Activated naive CD4-positive, alpha-beta T cell treated with anti-CD3 and anti-CD28 coated beads for 36 hours (primary cell): ENCODE measurements at regions of chrX and their contacts with region 1.

Region 1: DNA sequence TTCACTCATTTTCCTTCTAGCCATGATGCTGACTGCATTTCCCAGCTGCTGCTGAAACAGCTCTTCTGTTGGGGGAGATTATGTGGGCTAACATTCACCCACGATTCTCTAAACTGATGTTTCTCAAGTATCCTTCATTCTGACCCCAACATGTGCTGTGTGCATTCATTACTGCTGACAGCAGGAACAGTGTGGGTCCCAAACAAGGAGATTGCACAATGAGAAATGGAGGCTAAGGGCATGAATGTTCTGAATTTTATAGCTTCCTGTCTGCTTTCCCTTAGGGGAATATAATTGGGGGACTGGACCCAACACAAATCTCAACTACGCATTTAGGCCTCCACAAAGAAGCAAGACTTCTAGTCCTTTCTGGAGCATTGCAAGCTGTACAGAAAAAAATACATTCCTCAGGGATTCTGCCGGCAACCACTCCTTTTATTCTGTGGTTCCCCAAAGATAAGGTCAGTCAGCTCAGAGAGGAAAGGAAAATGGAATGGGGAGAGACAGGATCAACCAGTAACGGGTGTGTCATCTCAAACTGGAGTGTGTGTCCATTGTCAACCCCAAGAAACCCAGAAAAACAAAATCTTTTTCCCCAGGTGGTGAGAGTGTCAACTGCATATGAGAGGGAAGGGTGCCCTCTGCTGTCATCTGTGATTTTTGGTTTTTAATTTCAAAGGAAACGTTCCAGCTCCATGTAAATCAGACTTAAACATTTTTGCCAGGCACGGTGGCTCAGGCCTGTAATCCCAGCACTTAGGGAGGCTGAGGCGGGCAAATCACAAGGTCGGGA is 81.5 kb upstream of the EGFL6 start:
- DNase-seq: peak; percentile 58
- H3K4me3 Mint-ChIP-seq: no peak overlapping the region
- H3K27ac Mint-ChIP-seq: peak overlapping the region; percentile 68
- H3K4me1 Mint-ChIP-seq: peaks cover 16% of the 10 kb centered on the region
- H3K27me3 Mint-ChIP-seq: no peaks in the 10 kb centered on the region

Region 2: DNA sequence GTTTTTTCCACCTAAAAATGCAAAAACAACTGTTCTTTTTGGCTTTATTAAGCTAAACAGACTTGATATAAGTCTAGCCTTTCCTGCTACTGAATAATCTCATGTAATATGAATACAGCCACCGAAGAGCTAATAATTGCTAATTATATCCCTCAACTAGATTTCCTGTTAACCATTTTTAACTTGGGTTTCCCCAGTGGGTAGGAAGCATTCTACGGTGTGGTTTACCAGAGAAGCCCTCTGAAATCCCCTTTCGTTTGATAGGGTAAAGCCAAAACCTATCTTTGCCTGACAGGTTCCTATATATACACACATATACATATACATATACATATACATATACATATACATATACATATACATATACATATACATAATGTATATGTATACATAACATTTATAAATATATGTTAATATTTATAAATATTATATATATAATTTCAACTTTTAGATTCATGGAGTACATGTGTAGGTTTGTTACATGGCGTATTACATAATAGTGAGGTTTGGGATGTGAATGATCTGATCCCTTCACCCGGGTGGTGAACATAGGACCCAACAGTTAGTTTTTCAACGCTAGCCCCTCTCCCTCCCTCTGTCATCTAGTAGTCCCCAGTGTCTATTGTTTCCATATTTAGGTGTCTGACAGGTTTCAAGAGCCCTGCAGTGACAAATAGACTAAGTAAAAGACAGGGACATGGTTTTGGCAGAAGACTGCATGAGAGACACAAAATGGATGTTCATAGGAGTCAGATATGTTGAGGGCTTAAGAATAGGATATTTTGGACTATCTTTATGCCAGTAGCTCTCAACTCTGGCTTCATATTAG is 230.5 kb before region 1 on chrX:
- CTCF ChIA-PET with region 1: no interaction called
- intact Hi-C with region 1: loop called (anchors 5 kb)
- DNase-seq: peak; percentile 17
- H3K4me3 Mint-ChIP-seq: no peak overlapping the region
- H3K27ac Mint-ChIP-seq: no peak overlapping the region
- H3K4me1 Mint-ChIP-seq: peaks cover 29% of the 10 kb centered on the region
- H3K27me3 Mint-ChIP-seq: no peaks in the 10 kb centered on the region

Region 3: DNA sequence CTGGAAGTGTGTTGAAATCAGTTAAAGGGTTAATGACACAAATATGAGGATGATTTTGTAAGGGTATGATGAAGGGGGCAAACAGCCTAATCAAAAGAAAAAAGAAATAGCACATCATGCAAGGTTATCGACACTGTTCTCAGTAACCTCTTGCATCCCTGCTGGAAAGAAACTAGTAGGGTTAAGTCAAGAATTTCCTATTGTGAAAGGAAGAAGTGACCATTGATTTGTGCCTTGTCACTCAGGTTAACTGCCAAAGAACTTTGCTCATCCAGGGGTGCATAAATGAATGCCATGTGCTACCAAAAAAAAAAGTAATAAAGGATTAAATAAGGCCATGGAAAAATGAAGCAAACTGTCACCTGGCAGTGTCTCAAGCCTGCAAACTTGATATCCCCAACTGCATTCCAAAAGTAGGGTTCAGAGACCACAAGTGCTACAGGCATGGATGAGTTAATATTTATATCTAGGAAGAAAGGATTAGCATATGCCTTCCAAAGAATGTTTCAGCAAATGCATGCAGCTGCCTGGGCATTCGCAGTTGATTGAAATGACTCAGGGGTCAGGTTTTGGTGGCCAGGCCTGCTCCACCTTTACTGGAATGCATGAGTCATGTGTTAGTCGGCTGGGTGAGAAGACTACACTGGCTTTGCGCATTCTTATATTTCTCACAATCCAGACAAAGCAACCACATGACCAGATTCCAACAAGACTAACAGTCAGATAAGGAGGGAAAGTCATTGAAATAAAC is 89.7 kb before region 1 on chrX:
- CTCF ChIA-PET with region 1: no interaction called
- intact Hi-C with region 1: no loop called
- DNase-seq: peak; percentile 20
- H3K4me3 Mint-ChIP-seq: no peak overlapping the region
- H3K27ac Mint-ChIP-seq: no peak overlapping the region
- H3K4me1 Mint-ChIP-seq: peaks cover 8% of the 10 kb centered on the region
- H3K27me3 Mint-ChIP-seq: no peaks in the 10 kb centered on the region

Region 4: DNA sequence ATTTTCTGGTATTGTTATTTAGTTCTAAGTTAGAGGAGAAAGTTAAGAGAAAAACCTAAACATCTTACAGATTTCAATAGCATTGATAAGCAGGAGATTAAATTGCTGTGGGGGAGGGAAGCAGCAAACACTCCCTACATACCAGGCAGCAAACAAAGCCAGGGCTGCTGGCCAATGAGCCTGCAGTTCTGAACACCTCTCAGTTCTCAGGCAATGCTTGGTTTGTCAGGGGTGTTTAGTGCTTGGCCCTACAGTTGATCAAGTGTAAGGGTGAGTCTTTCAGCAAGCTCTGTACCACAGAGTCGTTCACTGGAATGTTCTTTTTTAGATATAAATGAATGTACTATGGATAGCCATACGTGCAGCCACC is 120.1 kb after region 1 on chrX:
- CTCF ChIA-PET with region 1: no interaction called
- intact Hi-C with region 1: no loop called
- DNase-seq: no peak
- H3K4me3 Mint-ChIP-seq: no peak overlapping the region
- H3K27ac Mint-ChIP-seq: no peak overlapping the region
- H3K4me1 Mint-ChIP-seq: no peaks in the 10 kb centered on the region
- H3K27me3 Mint-ChIP-seq: no peaks in the 10 kb centered on the region